ENCODE measurements at regions of chr18 and their contacts with region 1.

Region 1: DNA sequence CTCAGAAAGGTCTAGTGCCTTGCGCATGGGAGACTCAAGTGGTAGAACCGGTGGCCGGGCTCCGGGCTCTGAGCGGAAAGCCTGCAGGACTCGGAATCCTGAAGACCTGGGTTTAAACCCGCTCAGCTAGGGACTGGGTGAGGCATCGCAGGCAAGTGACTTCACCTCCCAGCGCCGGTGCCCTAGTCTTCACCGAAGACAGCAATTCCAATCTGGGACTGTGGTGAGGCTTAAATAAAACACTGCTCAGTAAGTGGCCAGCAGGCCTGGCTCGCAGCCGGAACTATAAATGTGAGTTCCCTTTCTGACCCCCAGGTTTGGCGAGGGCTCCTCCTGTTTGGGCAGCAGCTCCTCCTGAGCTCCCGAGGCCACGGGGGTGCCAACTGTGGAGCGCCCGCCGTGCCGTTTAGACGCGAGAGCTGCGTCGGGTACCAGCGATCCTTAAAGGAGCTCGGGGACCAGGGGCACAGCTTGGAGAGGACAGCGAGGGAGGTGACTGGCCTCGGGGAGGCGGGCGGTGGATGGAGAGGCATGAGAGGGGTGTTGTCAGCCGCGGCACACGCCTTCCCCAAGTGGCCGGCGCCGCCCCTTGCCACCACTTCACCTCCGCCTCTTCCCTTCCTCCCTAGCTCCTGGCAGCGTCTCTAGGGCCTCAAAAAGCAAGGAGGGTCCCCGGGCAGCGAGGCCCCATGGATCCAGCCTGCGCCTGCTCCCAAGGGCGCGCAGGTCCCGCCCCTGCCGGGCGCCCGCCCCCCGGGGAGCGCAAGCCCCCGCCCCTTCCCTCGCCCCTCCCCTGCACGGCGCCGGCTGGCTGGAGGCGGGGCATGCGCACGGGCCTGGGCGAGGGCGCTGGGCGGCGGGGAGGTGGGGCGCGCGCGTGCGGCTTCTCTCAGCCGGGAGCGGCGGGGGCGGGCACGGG is 736 bp upstream of the MTCL1 start:
- DNase-seq: peak; percentile 91 to 96 (median 96)
- ATAC-seq: peak; percentile 97
- H3K4me3 ChIP-seq: peak overlapping the region; percentile 91
- H3K27ac ChIP-seq: peak overlapping the region; percentile 59
- H3K4me1 ChIP-seq: peaks cover 4% of the 10 kb centered on the region
- H3K27me3 ChIP-seq: no peaks in the 10 kb centered on the region

Region 2: GRCh38 chr18:8800449-8800848 is 95.8 kb after region 1 on chr18:
- intact Hi-C with region 1: loop called in 1 of 4 experiments (anchors 10 kb)
- DNase-seq: no peak
- ATAC-seq: peak in 1 of 2 donors; percentile 28
- H3K4me3 ChIP-seq: no peak overlapping the region
- H3K27ac ChIP-seq: no peak overlapping the region
- H3K4me1 ChIP-seq: peaks cover 3% of the 10 kb centered on the region
- H3K27me3 ChIP-seq: no peaks in the 10 kb centered on the region

Measured in right cardiac atrium (tissue), 5 donors.